PC-9 (cell line): ENCODE measurements at regions of chr1 and their contacts with region 1.

Region 1: GRCh38 chr1:65247513-65248359 is 61.6 kb upstream of the DNAJC6 start:
- DNase-seq: peak; percentile 90 to 97
- H3K4me3 ChIP-seq: no peak overlapping the region; the same call in 1 of the 2 replicates
- H3K27ac ChIP-seq: peak overlapping the region; percentile 85
- H3K4me1 ChIP-seq: peaks cover 19% of the 10 kb centered on the region
- H3K27me3 ChIP-seq: no peaks in the 10 kb centered on the region
- CTCF ChIP-seq: no peak

Region 2: DNA sequence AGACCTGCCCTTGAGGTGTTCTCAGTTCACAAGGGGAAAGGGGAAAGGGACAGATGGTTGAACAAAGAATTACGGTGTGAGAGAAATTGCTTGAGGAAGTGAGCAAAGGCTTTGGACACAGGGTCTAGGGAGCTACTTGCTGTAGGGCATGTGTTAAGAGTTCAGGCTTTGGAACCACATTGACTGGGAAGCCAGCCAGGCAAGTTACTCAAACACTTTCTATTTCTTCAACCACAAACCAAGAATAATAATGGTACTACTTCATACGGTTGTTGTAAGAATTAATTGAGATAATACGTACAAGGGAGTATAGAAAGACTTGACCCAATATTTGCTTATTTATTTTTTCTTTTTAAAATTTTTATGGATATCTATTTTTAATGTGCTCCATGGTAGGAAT is 73.2 kb before region 1 on chr1:
- CTCF ChIA-PET with region 1: no interaction called
- POLR2A ChIA-PET with region 1: interaction called, 7 read pairs
- intact Hi-C with region 1: loop called (anchors 5 kb)
- DNase-seq: peak; percentile 74 to 98
- H3K4me3 ChIP-seq: no peak overlapping the region
- H3K27ac ChIP-seq: peak overlapping the region; percentile 81
- H3K4me1 ChIP-seq: peaks cover 83% of the 10 kb centered on the region
- H3K27me3 ChIP-seq: no peaks in the 10 kb centered on the region
- CTCF ChIP-seq: no peak

Region 3: DNA sequence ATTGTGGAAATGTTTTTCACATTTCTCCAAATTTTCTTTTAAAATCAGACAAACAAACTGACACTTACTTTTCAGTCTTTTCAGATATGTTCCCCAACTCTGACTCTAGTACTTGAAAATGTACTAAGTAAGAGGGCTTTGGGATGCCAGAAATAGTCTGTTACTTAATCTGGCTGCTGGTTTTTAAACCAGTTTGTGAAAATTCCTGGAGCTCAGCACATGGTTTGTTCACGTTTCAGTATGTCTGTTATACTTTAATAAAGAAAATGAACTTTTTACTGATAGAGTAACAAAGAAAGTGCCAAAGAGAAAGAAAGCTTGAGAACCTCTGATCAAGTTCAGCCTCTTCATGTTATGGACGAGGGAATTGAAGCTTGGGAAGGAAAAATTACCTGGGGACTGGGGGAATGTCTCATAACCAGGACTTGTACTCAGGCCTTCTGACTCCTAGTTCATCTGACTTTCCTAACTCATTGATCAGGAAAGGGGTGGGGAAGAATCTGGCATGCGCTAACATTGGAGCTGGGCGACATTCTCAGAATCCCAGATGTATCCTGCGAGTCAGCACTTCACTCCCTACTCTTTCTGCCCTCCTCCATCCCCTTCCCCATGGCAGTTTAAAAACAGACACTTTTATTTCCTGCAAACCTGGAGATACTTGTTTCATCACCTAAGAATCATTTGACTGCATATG is 30.8 kb after region 1 on chr1:
- CTCF ChIA-PET with region 1: no interaction called
- POLR2A ChIA-PET with region 1: no interaction called
- intact Hi-C with region 1: no loop called
- DNase-seq: no peak
- H3K4me3 ChIP-seq: no peak overlapping the region
- H3K27ac ChIP-seq: no peak overlapping the region
- H3K4me1 ChIP-seq: peaks cover 7% of the 10 kb centered on the region
- H3K27me3 ChIP-seq: no peaks in the 10 kb centered on the region
- CTCF ChIP-seq: no peak

Region 4: GRCh38 chr1:65319141-65319540 is 71.4 kb after region 1 on chr1:
- CTCF ChIA-PET with region 1: no interaction called
- POLR2A ChIA-PET with region 1: interaction called, 28 read pairs
- intact Hi-C with region 1: no loop called
- DNase-seq: no peak
- H3K4me3 ChIP-seq: no peak overlapping the region
- H3K27ac ChIP-seq: no peak overlapping the region
- H3K4me1 ChIP-seq: no peaks in the 10 kb centered on the region
- H3K27me3 ChIP-seq: no peaks in the 10 kb centered on the region
- CTCF ChIP-seq: no peak

Region 5: GRCh38 chr1:65431111-65431705 is 183.5 kb after region 1 on chr1:
- CTCF ChIA-PET with region 1: no interaction called
- POLR2A ChIA-PET with region 1: interaction called, 3 read pairs
- intact Hi-C with region 1: loop called (anchors 1 kb)
- DNase-seq: no peak
- H3K4me3 ChIP-seq: no peak overlapping the region
- H3K27ac ChIP-seq: no peak overlapping the region
- H3K4me1 ChIP-seq: peaks cover 22% of the 10 kb centered on the region
- H3K27me3 ChIP-seq: no peaks in the 10 kb centered on the region
- CTCF ChIP-seq: peak; percentile 70